ENCODE measurements at regions of chr3 and their contacts with region 1.

Region 1: DNA sequence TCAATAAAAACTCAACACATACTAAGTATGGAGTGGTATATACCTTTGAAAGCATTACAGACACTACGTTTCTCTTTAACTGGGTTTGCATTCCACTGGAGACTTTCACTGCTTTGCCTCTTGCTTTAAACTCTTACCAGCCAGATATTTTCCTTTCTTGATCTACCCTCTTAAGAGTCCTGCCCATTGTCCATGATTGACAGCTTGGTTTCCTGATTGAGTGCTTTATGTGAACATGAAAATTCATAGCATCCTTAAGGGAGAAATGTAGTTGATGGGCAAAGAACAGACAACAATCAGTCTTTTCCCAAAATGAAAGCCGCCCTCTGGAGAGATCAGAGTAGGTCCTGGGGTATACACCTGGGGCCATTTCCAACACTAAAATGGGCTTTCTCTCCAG is 78.6 kb downstream of the PTPRG start:
- DNase-seq: no peak
- ATAC-seq: no peak

Region 2: GRCh38 chr3:60781935-60782334 is 858.1 kb before region 1 on chr3:
- intact Hi-C with region 1: no loop called
- DNase-seq: no peak
- ATAC-seq: no peak

Region 3: GRCh38 chr3:61595288-61595687 is 44.7 kb before region 1 on chr3:
- intact Hi-C with region 1: loop called (anchors 5 kb)
- DNase-seq: no peak
- ATAC-seq: no peak

Region 4: DNA sequence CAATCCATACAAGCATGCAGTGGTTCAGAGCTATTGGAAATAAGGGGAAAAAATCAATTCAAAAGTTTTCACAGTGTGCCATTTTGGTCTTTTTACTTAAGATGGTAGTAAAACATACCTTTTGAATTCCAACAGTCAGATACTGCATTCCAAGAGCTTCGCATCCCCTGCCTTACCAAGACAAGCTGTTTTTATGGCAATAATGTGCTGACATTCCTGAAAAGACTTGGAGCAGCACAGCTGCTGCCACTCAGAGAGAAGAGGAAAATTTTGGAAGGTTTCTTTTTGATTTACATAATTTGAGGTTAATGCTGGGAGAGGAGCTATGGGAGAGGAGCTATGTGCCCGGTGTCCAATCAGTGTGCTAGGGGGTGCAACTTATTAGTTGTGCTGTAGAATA is 585.1 kb after region 1 on chr3:
- intact Hi-C with region 1: no loop called
- DNase-seq: no peak
- ATAC-seq: no peak

Measured in Right ventricle myocardium inferior (tissue), 1 donor.